ENCODE measurements at regions of chr1 and their contacts with region 1.

Region 1: GRCh38 chr1:207362962-207363858 is 41.7 kb downstream of the CD55 start:
- DNase-seq: peak; percentile 39
- H3K4me3 Mint-ChIP-seq: no peak overlapping the region
- H3K27ac Mint-ChIP-seq: no peak overlapping the region
- H3K4me1 Mint-ChIP-seq: peaks cover 5% of the 10 kb centered on the region
- H3K27me3 Mint-ChIP-seq: no peaks in the 10 kb centered on the region

Region 2: GRCh38 chr1:207336559-207337467 is 26.4 kb before region 1 on chr1:
- CTCF ChIA-PET with region 1: interaction called, 3 read pairs
- intact Hi-C with region 1: loop called (anchors 1 kb)
- DNase-seq: peak; percentile 43
- H3K4me3 Mint-ChIP-seq: no peak overlapping the region
- H3K27ac Mint-ChIP-seq: peak overlapping the region; percentile 82
- H3K4me1 Mint-ChIP-seq: peaks cover 68% of the 10 kb centered on the region
- H3K27me3 Mint-ChIP-seq: no peaks in the 10 kb centered on the region

Region 3: DNA sequence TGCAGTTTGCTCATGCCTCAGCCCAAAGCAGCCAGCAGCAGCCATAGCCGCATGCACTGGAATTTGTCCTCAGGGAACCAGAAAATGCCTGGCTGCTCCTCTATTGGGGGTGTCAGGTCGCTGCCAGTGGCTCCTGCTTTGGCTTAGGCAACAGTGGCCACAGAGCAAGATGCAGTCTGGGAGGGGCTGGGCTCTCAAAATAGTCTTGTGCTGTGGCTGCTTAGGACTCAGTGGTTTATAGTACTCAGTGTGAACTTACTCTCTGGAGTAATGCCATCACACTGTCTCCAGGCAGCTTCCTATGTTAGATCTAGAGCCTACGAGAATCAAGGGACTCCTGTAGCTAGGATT is 16.7 kb before region 1 on chr1:
- CTCF ChIA-PET with region 1: no interaction called
- intact Hi-C with region 1: loop called (anchors 1 kb)
- DNase-seq: no peak
- H3K4me3 Mint-ChIP-seq: no peak overlapping the region
- H3K27ac Mint-ChIP-seq: no peak overlapping the region
- H3K4me1 Mint-ChIP-seq: peaks cover 86% of the 10 kb centered on the region
- H3K27me3 Mint-ChIP-seq: no peaks in the 10 kb centered on the region

Region 4: DNA sequence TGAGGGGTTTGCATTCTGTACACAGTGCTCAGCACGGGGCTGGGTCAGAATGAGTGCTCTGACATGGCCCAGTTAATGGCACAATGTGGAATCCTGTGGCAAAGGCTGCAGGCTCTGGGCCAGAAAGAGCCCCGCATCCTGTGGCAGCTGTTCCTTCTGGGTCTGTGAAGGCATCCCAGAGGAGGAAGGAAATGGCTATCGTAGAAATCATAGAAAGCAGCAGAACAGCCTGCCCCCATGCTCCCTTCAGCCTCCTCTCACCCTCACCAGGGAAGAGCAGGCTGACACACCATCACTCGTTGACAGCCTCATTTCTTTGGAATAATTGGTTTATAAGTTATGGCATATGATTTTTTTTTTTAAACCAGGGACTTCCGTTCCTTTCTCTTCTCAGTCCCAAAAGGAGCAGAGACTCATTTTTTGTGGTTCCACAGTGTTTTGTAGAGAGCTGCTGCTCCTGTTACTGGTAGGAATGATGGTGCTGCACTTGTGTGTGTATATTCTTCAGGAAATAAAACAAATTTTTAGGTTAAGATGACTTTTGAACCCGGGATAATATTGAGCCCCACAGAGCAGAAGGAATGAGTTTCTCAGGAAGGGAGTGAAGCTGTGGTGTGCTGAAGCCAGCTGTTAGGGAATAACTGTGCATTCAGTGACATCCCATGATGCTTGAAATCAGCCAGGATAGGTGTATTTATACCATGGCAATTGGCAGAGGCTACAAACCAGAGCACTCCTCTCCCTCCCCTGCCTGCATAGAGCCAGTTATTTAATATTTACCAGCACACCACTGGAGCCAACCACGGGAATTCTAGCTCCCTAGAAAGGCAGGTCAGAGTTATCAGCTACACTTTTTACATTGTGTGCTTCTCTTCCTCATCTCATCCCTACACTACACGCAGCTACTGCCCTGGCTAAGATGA is 849.0 kb after region 1 on chr1:
- CTCF ChIA-PET with region 1: no interaction called
- intact Hi-C with region 1: no loop called
- DNase-seq: no peak
- H3K4me3 Mint-ChIP-seq: no peak overlapping the region
- H3K27ac Mint-ChIP-seq: no peak overlapping the region
- H3K4me1 Mint-ChIP-seq: no peaks in the 10 kb centered on the region
- H3K27me3 Mint-ChIP-seq: peaks cover 6% of the 10 kb centered on the region